MCF 10A (cell line): ENCODE measurements at regions of chr6 and their contacts with region 1.

Region 1: DNA sequence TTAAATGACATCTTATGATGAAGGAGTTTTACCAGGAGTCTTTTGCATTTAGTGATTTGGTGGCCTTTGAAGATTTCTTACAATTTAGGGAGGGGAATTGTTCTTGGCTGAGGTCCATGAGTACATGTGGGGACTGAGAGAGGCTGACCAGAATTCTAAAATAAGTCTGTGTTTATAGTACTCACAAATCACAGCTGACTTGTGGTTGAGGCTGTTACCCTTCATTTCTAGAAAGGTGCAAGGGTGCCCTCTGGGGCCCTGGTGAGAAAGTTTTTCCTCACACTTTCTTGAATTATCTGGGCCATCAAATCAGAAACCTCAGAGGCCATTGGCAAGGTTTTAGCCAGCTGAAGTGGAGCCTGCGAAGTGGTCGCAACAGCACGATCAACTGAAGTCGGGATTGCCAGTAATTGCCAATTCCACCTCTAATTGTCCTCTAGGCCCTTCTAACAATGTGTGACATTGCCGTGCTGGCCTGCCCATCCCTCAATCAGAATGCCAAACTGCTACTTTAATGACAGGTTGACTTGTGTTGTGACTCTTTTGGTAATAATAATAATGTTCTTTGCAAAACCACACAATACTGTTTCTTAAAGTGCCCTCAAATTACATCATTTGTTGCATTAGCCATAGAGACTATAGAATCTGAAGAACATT is 221.6 kb downstream of the OGFRL1 start:
- DNase-seq: peak; percentile 67
- H3K4me3 Mint-ChIP-seq: no peak overlapping the region
- H3K27ac Mint-ChIP-seq: peak overlapping the region; percentile 7
- H3K4me1 Mint-ChIP-seq: peaks cover 6% of the 10 kb centered on the region
- H3K27me3 Mint-ChIP-seq: no peaks in the 10 kb centered on the region
- CTCF ChIP-seq: peak; percentile 64

Region 2: DNA sequence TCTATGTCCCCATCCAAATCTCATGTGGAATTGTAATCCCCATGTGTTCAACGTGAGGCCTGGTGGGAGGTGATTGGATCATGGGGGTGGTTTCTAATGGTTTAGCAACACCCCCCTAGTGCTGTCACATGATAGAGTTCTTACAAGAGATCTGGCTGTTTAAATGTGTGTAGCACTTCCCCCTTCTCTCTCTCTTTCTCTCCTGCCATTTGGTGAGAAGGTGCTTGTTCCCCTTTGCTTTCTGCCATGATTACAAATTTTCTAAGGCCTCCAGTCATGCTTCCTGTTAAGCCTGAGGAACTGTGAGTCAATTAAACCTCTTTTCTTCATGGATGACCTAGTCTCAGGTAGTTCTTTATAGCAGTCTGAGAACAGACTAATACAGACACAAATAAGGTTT is 56.1 kb before region 1 on chr6:
- CTCF ChIA-PET with region 1: no interaction called
- POLR2A ChIA-PET with region 1: no interaction called
- intact Hi-C with region 1: no loop called
- DNase-seq: no peak
- H3K4me3 Mint-ChIP-seq: no peak overlapping the region
- H3K27ac Mint-ChIP-seq: no peak overlapping the region
- H3K4me1 Mint-ChIP-seq: no peaks in the 10 kb centered on the region
- H3K27me3 Mint-ChIP-seq: no peaks in the 10 kb centered on the region
- CTCF ChIP-seq: no peak

Region 3: DNA sequence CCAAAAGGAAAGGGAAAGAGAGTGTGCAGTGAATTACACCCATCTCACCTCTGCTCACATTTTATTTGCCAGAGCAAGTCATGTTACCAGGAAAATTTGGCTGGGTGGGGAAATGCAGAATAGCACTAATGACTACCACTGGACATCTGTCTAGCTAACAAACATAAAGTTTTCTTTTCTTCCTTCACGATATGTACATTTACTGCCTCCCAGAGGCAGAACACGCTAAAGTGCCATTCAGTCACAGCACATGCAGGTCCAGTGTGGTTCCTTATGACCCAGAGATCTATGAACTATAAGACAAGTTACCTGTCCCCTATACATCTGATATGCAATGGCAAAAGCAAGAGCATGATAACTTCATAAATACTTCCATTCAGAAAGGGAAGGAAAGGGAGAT is 27.4 kb before region 1 on chr6:
- CTCF ChIA-PET with region 1: interaction called, 16 read pairs
- POLR2A ChIA-PET with region 1: no interaction called
- intact Hi-C with region 1: no loop called
- DNase-seq: peak; percentile 26
- H3K4me3 Mint-ChIP-seq: no peak overlapping the region
- H3K27ac Mint-ChIP-seq: no peak overlapping the region
- H3K4me1 Mint-ChIP-seq: peaks cover 17% of the 10 kb centered on the region
- H3K27me3 Mint-ChIP-seq: no peaks in the 10 kb centered on the region
- CTCF ChIP-seq: peak; percentile 36

Region 4: DNA sequence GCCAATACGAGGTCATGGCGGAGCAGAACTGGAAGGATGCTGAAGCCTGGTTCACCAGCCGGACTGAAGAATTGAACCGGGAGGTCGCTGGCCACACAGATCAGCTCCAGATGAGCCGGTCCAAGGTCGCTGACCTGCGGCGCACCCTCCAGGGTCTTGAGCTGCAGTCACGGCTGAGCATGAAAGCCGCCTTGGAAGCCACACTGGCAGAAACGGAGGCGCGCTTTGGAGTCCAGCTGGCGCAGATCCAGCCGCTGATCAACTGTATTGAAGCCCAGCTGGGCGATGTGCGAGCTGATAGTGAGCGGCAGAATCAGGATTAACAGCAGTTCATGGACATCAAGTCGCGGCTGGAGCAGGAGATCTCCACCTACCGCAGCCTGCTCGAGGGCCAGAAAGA is 75.3 kb after region 1 on chr6:
- CTCF ChIA-PET with region 1: no interaction called
- POLR2A ChIA-PET with region 1: no interaction called
- intact Hi-C with region 1: no loop called
- DNase-seq: no peak
- H3K4me3 Mint-ChIP-seq: no peak overlapping the region
- H3K27ac Mint-ChIP-seq: no peak overlapping the region
- H3K4me1 Mint-ChIP-seq: no peaks in the 10 kb centered on the region
- H3K27me3 Mint-ChIP-seq: no peaks in the 10 kb centered on the region
- CTCF ChIP-seq: no peak